CD8-positive, alpha-beta T cell (primary cell): ENCODE measurements at regions of chr9 and their contacts with region 1.

Region 1: DNA sequence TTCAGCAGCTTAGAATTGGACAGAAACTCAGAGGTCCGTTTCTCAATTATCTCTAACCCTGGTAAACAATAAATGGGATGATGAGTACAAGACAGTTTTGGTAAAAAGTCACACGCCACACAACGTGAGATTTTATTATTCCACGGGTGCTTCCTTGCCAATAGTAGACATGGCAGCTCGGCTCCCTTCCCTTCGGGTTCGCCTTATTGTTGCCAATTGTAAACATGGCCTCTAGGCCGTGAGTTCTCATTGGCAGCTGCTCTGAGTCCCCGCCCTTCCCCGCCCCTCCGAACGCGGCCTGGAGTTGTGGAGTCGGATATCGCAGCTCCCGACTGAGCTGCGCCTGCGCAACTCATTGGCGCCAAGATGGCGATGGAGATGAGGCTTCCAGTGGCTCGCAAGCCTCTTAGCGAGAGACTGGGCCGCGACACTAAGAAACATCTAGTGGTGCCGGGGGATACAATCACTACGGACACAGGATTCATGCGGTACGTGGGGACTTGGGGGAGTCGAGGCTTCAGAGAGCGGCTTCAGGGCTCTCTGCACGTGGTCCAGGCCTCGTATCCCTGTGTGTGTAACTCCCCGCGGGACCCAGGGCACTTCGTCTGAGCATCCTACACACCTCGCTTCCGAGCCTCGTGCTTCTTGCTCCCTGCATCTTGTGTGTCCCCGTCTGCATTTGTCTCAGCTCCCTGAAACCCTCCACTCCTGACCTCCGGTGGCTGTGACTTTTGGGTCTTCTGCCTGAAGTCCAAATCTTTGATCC is at the start of gene EXOSC2:
- DNase-seq: peak; percentile 96 to 100 (median 97)
- ATAC-seq: peak; percentile 99
- H3K4me3 ChIP-seq: peak within 1 kb of the TSS; percentile 88 to 97
- H3K4me3 Mint-ChIP-seq: peak within 1 kb of the TSS; percentile 93
- H3K27ac ChIP-seq: peak within 1 kb of the TSS; percentile 73 to 78
- H3K27ac Mint-ChIP-seq: peak within 1 kb of the TSS; percentile 95
- H3K4me1 ChIP-seq: peaks cover 25% of the 10 kb centered on the region
- H3K4me1 Mint-ChIP-seq: peaks cover 39% of the 10 kb centered on the region
- H3K27me3 ChIP-seq: no peaks in the 10 kb centered on the region
- H3K27me3 Mint-ChIP-seq: no peaks in the 10 kb centered on the region
- CTCF ChIP-seq: no peak
- total RNA-seq, gene EXOSC2: 59.1 to 59.9 TPM

Region 2: DNA sequence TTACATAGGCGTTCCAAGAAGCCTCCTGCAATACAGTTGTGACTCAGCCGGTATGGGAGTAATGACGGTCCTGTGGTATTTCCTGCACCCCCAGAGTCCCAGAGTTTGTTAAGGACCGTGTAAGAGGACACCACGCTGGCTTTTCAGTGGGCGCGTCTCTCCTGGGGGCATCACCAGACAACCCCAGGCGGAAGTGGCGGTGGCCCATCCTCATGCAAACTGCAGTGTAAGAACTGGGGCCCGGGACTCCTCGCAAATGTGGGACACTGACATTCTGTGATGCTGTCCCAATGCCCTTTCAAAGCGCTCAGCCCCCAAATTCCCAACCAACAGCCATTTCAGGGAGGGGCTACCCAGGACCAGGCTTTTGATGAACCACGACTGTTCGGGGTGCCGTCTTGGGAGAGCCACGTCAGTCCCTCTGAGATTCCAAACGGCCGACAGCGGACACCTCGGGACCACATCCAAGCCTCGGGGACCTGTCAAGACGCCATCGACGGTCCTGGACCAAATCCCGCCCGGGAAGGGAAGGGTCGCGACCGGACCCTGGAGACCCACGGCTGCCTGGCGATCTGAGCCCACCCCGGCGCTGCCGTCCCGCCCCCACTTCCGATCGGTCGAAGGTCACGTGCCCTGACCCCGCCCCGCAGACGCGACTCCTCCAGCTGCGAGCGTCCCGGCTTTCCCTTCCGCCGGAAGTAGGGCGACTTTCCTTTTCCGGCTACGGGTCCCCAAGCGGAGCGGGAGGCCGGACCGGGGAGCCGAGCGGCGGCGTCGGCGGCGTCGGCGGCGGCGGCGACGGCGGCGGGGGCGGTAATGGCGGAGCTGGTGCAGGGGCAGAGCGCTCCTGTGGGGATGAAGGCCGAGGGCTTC is 114.5 kb before region 1 on chr9 and contains the start of gene FUBP3:
- CTCF ChIA-PET with region 1: no interaction called
- POLR2A ChIA-PET with region 1: no interaction called
- intact Hi-C with region 1: loop called (anchors 1 to 5 kb)
- DNase-seq: peak; percentile 62 to 94 (median 89)
- ATAC-seq: peak; percentile 71
- H3K4me3 ChIP-seq: peak within 1 kb of the TSS; percentile 74 to 94
- H3K4me3 Mint-ChIP-seq: peak within 1 kb of the TSS; percentile 87
- H3K27ac ChIP-seq: peak within 1 kb of the TSS; percentile 80 to 87
- H3K27ac Mint-ChIP-seq: peak within 1 kb of the TSS; percentile 94
- H3K4me1 ChIP-seq: peaks cover 27% of the 10 kb centered on the region
- H3K4me1 Mint-ChIP-seq: peaks cover 54% of the 10 kb centered on the region
- H3K27me3 ChIP-seq: no peaks in the 10 kb centered on the region
- H3K27me3 Mint-ChIP-seq: no peaks in the 10 kb centered on the region
- CTCF ChIP-seq: no peak
- total RNA-seq, gene FUBP3: 29.5 to 30.2 TPM

Region 3: GRCh38 chr9:130707225-130707976 is 13.8 kb after region 1 on chr9:
- CTCF ChIA-PET with region 1: interaction called, 23 read pairs
- POLR2A ChIA-PET with region 1: interaction called, 4 read pairs
- intact Hi-C with region 1: loop called (anchors 1 kb)
- DNase-seq: peak; percentile 18 to 83 (median 77)
- ATAC-seq: peak; percentile 48
- H3K4me3 ChIP-seq: no peak overlapping the region
- H3K4me3 Mint-ChIP-seq: no peak overlapping the region
- H3K27ac ChIP-seq: no peak overlapping the region
- H3K27ac Mint-ChIP-seq: no peak overlapping the region
- H3K4me1 ChIP-seq: no peaks in the 10 kb centered on the region
- H3K4me1 Mint-ChIP-seq: peaks cover 3% of the 10 kb centered on the region
- H3K27me3 ChIP-seq: no peaks in the 10 kb centered on the region
- H3K27me3 Mint-ChIP-seq: no peaks in the 10 kb centered on the region
- CTCF ChIP-seq: peak; percentile 93

Region 4: DNA sequence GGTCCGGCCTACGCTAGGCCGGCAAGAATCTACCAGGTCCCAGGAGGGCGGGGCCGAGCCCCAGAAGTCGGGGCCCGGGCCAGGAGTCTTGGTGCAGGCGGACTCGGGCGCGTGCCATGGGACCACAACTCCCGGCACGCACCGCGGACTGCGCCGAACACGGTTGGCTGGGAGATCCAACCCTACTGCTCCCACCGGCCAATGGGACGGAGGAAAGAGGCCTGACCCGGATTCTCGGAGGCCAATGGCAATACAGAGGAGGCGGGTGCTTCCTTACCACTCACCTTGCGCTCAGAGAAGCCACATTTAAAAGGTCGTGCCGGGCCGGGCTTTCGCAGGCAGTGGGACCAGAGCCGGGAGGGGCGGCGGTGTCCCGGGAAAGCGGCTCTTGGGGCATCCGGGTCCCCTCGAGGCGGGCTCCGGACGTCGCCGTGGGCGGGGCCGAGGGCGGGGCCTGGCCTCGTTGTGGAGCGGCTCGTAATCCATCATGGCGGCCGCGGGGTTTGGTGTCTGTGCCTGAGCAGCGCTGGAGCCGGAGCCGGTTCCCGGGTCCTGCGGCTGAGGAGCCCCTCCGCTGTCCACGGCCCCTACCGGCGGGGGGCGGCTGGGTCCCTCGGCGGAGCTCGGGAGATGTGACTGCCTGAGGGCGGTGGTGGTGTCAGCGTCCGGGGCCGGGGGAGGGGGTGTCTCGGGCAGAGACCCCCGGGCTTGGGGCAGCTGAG is 19.1 kb after region 1 on chr9:
- CTCF ChIA-PET with region 1: interaction called, 23 read pairs
- POLR2A ChIA-PET with region 1: interaction called, 4 read pairs
- intact Hi-C with region 1: loop called (anchors 1 kb)
- DNase-seq: peak; percentile 87 to 97 (median 95)
- ATAC-seq: peak; percentile 96
- H3K4me3 ChIP-seq: peak overlapping the region; percentile 81 to 92
- H3K4me3 Mint-ChIP-seq: peak overlapping the region; percentile 92
- H3K27ac ChIP-seq: peak overlapping the region; percentile 87 to 97
- H3K27ac Mint-ChIP-seq: peak overlapping the region; percentile 94
- H3K4me1 ChIP-seq: peaks cover 31% of the 10 kb centered on the region
- H3K4me1 Mint-ChIP-seq: peaks cover 36% of the 10 kb centered on the region
- H3K27me3 ChIP-seq: no peaks in the 10 kb centered on the region
- H3K27me3 Mint-ChIP-seq: no peaks in the 10 kb centered on the region
- CTCF ChIP-seq: no peak

Region 5: DNA sequence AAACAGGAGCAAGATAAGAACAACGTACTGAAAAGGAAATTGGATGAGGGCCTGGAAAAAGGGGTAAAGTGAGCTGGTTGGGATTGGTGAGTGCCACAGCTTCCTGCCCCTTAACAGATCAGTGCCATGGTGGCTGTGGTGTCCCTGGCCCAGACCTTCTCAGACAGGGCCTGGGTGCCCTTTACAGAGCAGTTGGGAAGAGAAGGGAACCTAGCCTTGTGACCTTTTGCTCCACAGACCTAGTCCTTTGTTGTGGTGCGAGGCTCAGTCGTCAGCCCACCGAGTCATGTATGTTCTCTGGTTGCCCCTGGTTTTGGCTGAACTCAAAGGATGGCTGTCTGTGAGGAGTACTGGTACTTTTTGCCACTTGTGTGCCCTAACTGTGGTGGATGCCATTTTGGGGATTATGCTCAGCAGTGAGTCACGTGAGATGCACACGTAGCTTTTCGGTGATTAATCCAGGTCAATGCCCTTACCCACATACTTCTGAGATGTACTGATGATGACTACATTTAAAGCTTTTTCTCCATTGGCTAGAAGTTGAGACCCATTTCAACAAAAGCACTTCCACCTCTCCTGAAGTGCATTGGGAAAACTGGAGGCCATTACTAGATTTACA is 48.3 kb after region 1 on chr9:
- CTCF ChIA-PET with region 1: no interaction called
- POLR2A ChIA-PET with region 1: no interaction called
- intact Hi-C with region 1: no loop called
- DNase-seq: no peak
- ATAC-seq: no peak
- H3K4me3 ChIP-seq: no peak overlapping the region
- H3K4me3 Mint-ChIP-seq: no peak overlapping the region
- H3K27ac ChIP-seq: no peak overlapping the region
- H3K27ac Mint-ChIP-seq: no peak overlapping the region
- H3K4me1 ChIP-seq: peaks cover 6% of the 10 kb centered on the region
- H3K4me1 Mint-ChIP-seq: peaks cover 18% of the 10 kb centered on the region
- H3K27me3 ChIP-seq: no peaks in the 10 kb centered on the region
- H3K27me3 Mint-ChIP-seq: no peaks in the 10 kb centered on the region
- CTCF ChIP-seq: no peak

Region 6: GRCh38 chr9:130770679-130771442 is 77.3 kb after region 1 on chr9:
- CTCF ChIA-PET with region 1: no interaction called
- POLR2A ChIA-PET with region 1: no interaction called
- intact Hi-C with region 1: no loop called
- DNase-seq: peak in 2 of 9 experiments; percentile 53 to 63
- ATAC-seq: peak; percentile 77
- H3K4me3 ChIP-seq: no peak overlapping the region
- H3K4me3 Mint-ChIP-seq: no peak overlapping the region
- H3K27ac ChIP-seq: no peak overlapping the region
- H3K27ac Mint-ChIP-seq: no peak overlapping the region
- H3K4me1 ChIP-seq: peaks cover 12% of the 10 kb centered on the region
- H3K4me1 Mint-ChIP-seq: peaks cover 47% of the 10 kb centered on the region
- H3K27me3 ChIP-seq: no peaks in the 10 kb centered on the region
- H3K27me3 Mint-ChIP-seq: no peaks in the 10 kb centered on the region
- CTCF ChIP-seq: peak; percentile 70